Activated CD8-positive, alpha-beta T cell treated with anti-CD3 and anti-CD28 coated beads, Interleukin-2, amount 10 ng/mL, durations not matched to agents 7 days and 5 days (primary cell): ENCODE measurements at regions of chr2 and their contacts with region 1.

Region 1: GRCh38 chr2:86079981-86080911 is 25.4 kb downstream of the POLR1A start:
- DNase-seq: peak; percentile 90
- ATAC-seq: peak; percentile 88
- H3K4me3 Mint-ChIP-seq: no peak overlapping the region
- H3K27ac Mint-ChIP-seq: peak overlapping the region; percentile 88
- H3K4me1 Mint-ChIP-seq: peaks cover 41% of the 10 kb centered on the region
- H3K27me3 Mint-ChIP-seq: no peaks in the 10 kb centered on the region

Region 2: GRCh38 chr2:85838181-85838580 is 242.1 kb before region 1 on chr2:
- CTCF ChIA-PET with region 1: interaction called, 442 read pairs
- POLR2A ChIA-PET with region 1: no interaction called
- DNase-seq: peak; percentile 17
- ATAC-seq: no peak
- H3K4me3 Mint-ChIP-seq: no peak overlapping the region
- H3K27ac Mint-ChIP-seq: peak overlapping the region; percentile 56
- H3K4me1 Mint-ChIP-seq: peaks cover 24% of the 10 kb centered on the region
- H3K27me3 Mint-ChIP-seq: peaks cover 3% of the 10 kb centered on the region

Region 3: DNA sequence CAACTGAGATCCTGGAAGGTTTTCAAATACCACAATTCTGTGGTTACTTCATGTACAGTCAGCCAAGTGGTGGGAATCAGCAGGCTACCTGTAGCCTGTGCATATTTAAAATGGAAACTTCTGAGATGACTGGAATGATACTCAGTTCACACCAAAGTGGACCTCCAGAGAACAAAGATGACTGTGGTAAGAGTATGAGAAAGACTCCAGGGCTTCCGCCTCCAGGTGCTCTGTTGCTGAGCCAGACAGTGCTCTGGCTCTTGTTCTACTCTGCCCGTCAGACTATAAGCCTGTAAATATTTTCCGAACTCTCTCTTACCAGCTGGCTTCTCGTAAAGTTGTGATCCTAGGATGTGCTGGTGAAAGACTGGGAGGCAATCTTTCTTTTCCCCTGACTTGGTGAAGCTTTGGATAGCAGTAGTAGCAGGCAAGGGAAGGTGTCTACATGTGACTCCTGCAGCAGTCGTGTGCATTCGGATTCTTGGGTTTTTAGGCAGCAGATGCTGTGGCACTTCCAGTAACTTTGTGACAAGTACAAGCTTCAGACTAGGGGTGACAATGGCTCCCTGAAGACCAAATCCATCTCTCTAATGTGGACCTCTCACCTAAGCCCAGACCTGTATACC is 214.6 kb before region 1 on chr2:
- CTCF ChIA-PET with region 1: interaction called, 10 read pairs
- POLR2A ChIA-PET with region 1: no interaction called
- DNase-seq: no peak
- ATAC-seq: no peak
- H3K4me3 Mint-ChIP-seq: no peak overlapping the region
- H3K27ac Mint-ChIP-seq: no peak overlapping the region
- H3K4me1 Mint-ChIP-seq: peaks cover 59% of the 10 kb centered on the region
- H3K27me3 Mint-ChIP-seq: no peaks in the 10 kb centered on the region

Region 4: DNA sequence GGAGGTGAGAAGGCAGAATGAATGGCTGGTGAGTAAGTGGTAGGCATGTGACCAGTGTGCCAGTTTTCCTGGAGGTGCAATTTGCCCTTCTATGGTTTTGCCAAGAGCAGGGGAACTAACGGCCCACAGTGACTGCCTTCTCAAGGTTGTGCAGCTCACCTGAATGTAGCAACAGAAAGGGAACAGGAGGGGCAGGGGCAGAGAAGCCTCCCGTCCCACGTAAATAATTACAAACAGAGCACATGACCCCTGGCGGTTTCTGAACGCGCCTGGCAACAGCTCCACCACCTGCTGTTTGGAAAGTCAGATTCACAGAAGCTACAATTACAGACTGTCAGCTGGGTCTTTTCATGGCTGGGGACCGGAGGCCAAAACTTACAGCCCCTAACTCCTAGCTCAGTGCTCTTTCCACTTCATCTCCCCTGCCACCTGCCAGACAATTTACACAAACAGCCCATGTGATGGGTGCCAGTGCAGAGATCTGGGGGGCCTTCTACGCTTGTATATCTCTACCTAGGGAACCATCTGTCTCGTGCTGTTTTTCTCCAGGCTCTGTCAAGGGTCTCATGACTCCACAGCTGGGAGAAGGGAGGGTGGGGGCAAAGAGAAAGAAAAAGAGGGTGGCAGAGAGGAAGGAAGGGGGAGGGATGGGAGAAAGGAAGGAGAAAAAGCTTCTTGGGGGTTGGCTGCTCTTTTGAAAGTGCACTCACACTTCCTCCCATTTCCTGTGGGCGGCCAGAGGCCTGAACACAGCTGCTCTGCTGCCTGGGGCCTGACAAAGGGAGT is 44.2 kb before region 1 on chr2:
- CTCF ChIA-PET with region 1: interaction called, 88 read pairs
- POLR2A ChIA-PET with region 1: interaction called, 7 read pairs
- DNase-seq: peak; percentile 81
- ATAC-seq: peak; percentile 48
- H3K4me3 Mint-ChIP-seq: peak overlapping the region; percentile 61
- H3K27ac Mint-ChIP-seq: peak overlapping the region; percentile 95
- H3K4me1 Mint-ChIP-seq: peaks cover 85% of the 10 kb centered on the region
- H3K27me3 Mint-ChIP-seq: no peaks in the 10 kb centered on the region

Region 5: GRCh38 chr2:86105252-86105968 is 25.2 kb after region 1 on chr2 and contains the start of gene POLR1A:
- CTCF ChIA-PET with region 1: interaction called, 15 read pairs
- POLR2A ChIA-PET with region 1: interaction called, 7 read pairs
- DNase-seq: peak; percentile 91
- ATAC-seq: peak; percentile 85
- H3K4me3 Mint-ChIP-seq: peak within 1 kb of the TSS; percentile 92
- H3K27ac Mint-ChIP-seq: peak within 1 kb of the TSS; percentile 99
- H3K4me1 Mint-ChIP-seq: peaks cover 46% of the 10 kb centered on the region
- H3K27me3 Mint-ChIP-seq: no peaks in the 10 kb centered on the region
- total RNA-seq, gene POLR1A: 40.8 to 41.5 TPM